Esophagus squamous epithelium (tissue), 5 donors: ENCODE measurements at regions of chr11 and their contacts with region 1.

Region 1: GRCh38 chr11:96338910-96339705 is 3.9 kb downstream of the MAML2 start:
- DNase-seq: no peak
- H3K4me3 ChIP-seq: peak overlapping the region; percentile 6 to 91 (median 80)
- H3K27ac ChIP-seq: peak overlapping the region; percentile 72 to 93 (median 85)
- H3K4me1 ChIP-seq: peaks cover 37 to 74% (median 40%) of the 10 kb centered on the region in 3 donors
- H3K27me3 ChIP-seq: no peaks in the 10 kb centered on the region
- CTCF ChIP-seq: peak in 1 of 6 experiments; percentile 8
- POLR2A ChIP-seq: no peak

Region 2: DNA sequence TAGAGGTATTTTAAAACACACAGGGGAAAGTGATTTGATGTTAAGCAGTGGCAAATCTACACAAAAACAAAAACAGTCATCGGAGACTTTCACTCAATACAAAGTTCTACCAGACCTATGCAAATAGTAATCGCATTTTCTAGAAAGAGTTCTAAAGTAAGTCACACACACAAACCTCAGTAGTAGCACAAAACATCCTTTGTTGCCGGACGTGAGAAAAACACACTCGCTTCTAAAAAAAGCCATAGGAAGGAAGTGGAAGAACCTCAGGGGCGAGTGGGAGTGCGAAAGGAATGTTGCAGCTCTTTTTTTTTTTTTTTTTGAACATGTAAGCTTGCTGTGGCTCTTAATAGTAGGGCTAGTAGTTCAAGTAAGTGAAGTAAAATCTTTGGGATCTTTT is 85.0 kb before region 1 on chr11:
- intact Hi-C with region 1: loop called (anchors 10 kb)
- DNase-seq: no peak
- H3K4me3 ChIP-seq: no peak overlapping the region
- H3K27ac ChIP-seq: peak overlapping the region in 2 of 4 donors; percentile 5 to 40
- H3K4me1 ChIP-seq: peaks cover 17 to 56% (median 17%) of the 10 kb centered on the region in 3 donors
- H3K27me3 ChIP-seq: no peaks in the 10 kb centered on the region
- CTCF ChIP-seq: no peak
- POLR2A ChIP-seq: no peak

Region 3: DNA sequence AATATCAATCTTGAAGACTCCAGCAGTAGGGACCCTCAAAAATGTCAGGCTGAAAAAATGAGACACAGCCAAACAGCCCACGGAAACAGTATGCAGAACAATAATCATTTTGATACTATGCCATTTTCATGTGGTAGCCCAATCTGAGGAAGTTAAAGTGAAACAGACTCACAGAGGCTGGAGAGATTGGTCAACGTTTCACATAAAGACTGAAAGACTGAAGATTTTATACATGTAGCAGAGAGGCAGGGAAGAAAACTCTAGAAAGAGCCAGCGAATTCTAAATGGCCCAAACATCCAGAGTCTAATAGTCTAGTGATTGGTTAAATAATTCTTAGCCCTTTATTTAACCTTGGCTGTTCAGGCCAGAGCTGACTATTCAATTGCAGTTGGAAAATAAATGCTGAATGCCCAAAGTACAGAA is 45.5 kb before region 1 on chr11:
- intact Hi-C with region 1: no loop called
- DNase-seq: no peak
- H3K4me3 ChIP-seq: peak overlapping the region in 1 of 4 donors; percentile 36
- H3K27ac ChIP-seq: peak overlapping the region in 3 of 4 donors; percentile 11 to 53 (median 28)
- H3K4me1 ChIP-seq: peaks cover 0 to 35% (median 12%) of the 10 kb centered on the region in 3 donors
- H3K27me3 ChIP-seq: no peaks in the 10 kb centered on the region
- CTCF ChIP-seq: no peak
- POLR2A ChIP-seq: no peak